PC-9 (cell line): ENCODE measurements at regions of chr9 and their contacts with region 1.

Region 1: DNA sequence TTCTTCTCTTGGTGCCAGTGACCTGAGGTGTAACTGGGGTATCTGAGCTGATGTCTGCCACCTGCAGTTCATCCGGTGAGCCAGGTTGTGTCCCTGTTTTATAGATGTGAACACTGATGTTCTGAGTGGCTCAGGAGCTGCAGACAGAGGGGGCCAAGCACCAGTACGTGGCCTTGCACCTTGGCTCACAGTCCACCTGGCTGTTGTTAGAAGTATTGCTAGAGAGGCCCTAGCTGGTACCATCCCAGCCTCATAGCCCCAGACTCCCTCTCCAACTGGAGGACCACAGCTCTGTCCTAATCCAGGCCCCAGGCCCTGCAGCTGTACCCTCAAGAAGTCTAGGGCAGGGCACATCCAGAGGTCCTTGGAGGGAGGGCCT is 16.2 kb downstream of the PHF2 start:
- DNase-seq: no peak
- H3K4me3 ChIP-seq: no peak overlapping the region
- H3K27ac ChIP-seq: no peak overlapping the region
- H3K4me1 ChIP-seq: no peaks in the 10 kb centered on the region
- H3K27me3 ChIP-seq: no peaks in the 10 kb centered on the region
- CTCF ChIP-seq: no peak

Region 2: GRCh38 chr9:93354451-93354850 is 238.2 kb before region 1 on chr9:
- CTCF ChIA-PET with region 1: no interaction called
- POLR2A ChIA-PET with region 1: interaction called, 11 read pairs
- intact Hi-C with region 1: no loop called
- DNase-seq: peak; percentile 10 to 91
- H3K4me3 ChIP-seq: no peak overlapping the region
- H3K27ac ChIP-seq: peak overlapping the region; percentile 65
- H3K4me1 ChIP-seq: peaks cover 19% of the 10 kb centered on the region
- H3K27me3 ChIP-seq: no peaks in the 10 kb centered on the region
- CTCF ChIP-seq: no peak

Region 3: GRCh38 chr9:93635186-93636111 is 42.8 kb after region 1 on chr9:
- CTCF ChIA-PET with region 1: no interaction called
- POLR2A ChIA-PET with region 1: no interaction called
- intact Hi-C with region 1: no loop called
- DNase-seq: no peak
- H3K4me3 ChIP-seq: no peak overlapping the region
- H3K27ac ChIP-seq: no peak overlapping the region
- H3K4me1 ChIP-seq: no peaks in the 10 kb centered on the region
- H3K27me3 ChIP-seq: no peaks in the 10 kb centered on the region
- CTCF ChIP-seq: no peak

Region 4: DNA sequence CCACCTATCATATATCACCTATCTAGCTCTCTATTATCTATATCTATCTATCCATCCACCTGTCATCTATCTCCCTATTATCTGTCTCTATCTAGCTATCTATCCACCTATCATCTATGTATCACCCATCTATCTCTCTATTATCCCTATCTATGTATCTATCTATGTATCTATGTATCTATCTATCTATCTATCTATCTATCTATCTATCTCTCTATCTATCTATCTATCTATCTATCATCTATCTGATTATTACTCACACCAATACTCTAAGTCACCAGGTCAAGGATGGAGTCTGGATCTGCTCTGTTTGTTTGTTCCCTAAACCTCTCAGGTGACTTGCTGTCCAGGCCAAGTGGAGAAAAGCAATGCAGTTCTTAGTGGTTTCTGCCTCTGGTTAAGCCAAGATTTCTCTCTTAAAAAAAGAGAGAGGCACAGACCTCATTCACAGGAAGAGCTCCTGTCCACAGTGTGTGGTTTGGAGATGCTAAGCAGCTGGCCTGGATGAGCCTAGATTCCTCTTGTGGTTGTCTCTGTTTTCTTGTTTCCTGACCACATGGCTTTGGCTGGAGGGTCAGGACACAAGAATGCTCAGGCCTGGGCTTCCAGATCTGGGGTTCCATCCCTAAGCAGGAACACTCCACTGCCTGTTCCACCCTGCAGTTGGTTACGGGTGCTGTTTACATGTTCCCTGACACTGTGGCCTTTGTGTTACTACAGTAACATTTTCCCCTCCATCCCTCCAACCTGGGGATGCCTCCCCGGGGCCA is 117.2 kb after region 1 on chr9:
- CTCF ChIA-PET with region 1: no interaction called
- POLR2A ChIA-PET with region 1: no interaction called
- intact Hi-C with region 1: no loop called
- DNase-seq: no peak
- H3K4me3 ChIP-seq: no peak overlapping the region
- H3K27ac ChIP-seq: no peak overlapping the region
- H3K4me1 ChIP-seq: no peaks in the 10 kb centered on the region
- H3K27me3 ChIP-seq: peaks cover 26% of the 10 kb centered on the region; the same call in 1 of the 2 replicates
- CTCF ChIP-seq: no peak